Right ventricle myocardium superior (tissue), 1 donor: ENCODE measurements at regions of chr2 and their contacts with region 1.

Region 1: DNA sequence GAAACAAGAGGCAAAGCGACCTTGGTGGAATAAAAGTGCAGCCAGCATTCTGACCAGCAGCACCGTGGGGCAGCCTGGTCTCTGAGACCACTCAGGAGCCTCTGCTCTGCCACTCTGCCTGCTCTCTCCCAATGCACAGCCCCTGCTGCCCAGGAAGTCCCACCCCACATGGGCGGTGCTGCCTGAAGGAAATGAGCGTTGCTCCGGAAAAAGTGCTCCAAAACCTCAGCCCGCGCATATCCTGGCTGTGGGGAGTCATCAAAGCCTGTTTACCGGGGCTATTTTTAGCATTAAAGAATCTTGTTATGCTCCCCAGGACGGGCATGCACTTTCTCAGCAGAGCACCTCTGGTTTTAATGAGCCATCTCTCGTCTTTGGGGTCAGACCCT is 54.5 kb downstream of the EPAS1 start:
- DNase-seq: peak; percentile 77
- ATAC-seq: peak; percentile 30

Region 2: GRCh38 chr2:46230115-46230571 is 121.6 kb before region 1 on chr2:
- intact Hi-C with region 1: loop called (anchors 5 kb)
- DNase-seq: peak; percentile 71
- ATAC-seq: peak; percentile 89

Region 3: GRCh38 chr2:46385786-46386577 is 34.2 kb after region 1 on chr2:
- intact Hi-C with region 1: no loop called
- DNase-seq: no peak
- ATAC-seq: no peak